ENCODE measurements at regions of chr1 and their contacts with region 1.

Region 1: DNA sequence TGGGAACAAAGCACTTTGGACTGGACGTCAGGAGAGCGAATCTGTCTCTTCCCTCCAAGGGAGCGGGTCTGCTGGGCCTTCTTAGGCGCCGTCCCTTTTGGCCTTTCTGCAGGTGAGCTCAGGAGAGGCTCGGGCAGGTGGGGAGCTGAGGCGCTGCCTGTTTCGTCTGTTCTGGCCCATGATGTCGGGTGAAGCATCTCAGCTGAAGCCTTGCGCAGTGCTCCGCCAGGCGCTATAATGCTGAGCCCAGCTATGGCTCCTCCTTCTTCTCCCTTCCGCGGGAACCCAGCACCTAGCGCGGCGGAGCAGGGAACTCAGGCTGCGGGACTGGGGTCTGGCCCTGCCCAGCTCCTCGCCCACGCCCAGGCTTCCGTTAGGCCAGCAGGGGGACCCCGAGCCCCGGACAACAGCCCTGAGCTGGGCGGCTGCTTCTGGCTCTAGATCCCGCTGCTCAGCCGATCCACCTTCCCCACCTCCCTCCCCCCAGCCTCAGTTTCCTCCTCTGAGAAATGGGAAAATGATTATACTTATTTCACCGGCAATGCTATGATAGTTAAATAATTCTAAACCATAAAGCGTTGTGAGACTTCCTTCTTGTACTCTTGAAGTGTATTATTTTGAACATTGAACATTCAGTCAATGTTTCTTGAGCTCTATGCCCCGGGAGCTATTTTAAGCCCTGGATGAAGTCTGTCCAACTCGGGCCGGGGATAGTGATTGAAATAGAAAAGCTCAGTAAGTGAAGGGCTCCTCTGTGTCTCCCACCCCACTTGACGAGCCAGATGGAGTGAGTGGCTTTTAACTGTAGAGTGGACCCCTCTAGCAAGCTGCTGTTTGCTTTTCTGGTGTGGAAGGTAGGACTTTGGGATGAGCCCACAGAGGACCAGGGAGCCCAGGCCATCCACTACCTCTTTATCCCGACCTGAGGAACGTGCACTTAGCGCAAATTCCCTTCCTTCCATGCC is 9.6 kb upstream of the ADORA1 start:
- DNase-seq: peak; percentile 80 to 81
- H3K4me3 ChIP-seq: no peak overlapping the region
- H3K27ac ChIP-seq: no peak overlapping the region
- H3K4me1 ChIP-seq: no peaks in the 10 kb centered on the region
- H3K27me3 ChIP-seq: no peaks in the 10 kb centered on the region
- CTCF ChIP-seq: peak; percentile 60 to 92 (median 81)
- POLR2A ChIP-seq: no peak

Region 2: GRCh38 chr1:203172128-203173010 is 54.5 kb after region 1 on chr1:
- intact Hi-C with region 1: loop called (anchors 5 kb)
- DNase-seq: peak; percentile 71 to 79
- H3K4me3 ChIP-seq: no peak overlapping the region
- H3K27ac ChIP-seq: peak overlapping the region in 1 of 3 donors; percentile 30
- H3K4me1 ChIP-seq: peaks cover 8 to 9% of the 10 kb centered on the region in 2 donors
- H3K27me3 ChIP-seq: no peaks in the 10 kb centered on the region
- CTCF ChIP-seq: peak; percentile 41 to 84 (median 72)
- POLR2A ChIP-seq: no peak

Measured in thyroid gland (tissue), 4 donors.